ENCODE measurements at regions of chr5 and their contacts with region 1.

Region 1: GRCh38 chr5:78964887-78965286 is 20.2 kb downstream of the ARSB start:
- DNase-seq: no peak
- H3K4me3 ChIP-seq: no peak overlapping the region
- H3K27ac ChIP-seq: no peak overlapping the region
- H3K4me1 ChIP-seq: no peaks in the 10 kb centered on the region
- H3K27me3 ChIP-seq: no peaks in the 10 kb centered on the region
- CTCF ChIP-seq: peak; percentile 50 to 83 (median 62)
- POLR2A ChIP-seq: no peak

Region 2: DNA sequence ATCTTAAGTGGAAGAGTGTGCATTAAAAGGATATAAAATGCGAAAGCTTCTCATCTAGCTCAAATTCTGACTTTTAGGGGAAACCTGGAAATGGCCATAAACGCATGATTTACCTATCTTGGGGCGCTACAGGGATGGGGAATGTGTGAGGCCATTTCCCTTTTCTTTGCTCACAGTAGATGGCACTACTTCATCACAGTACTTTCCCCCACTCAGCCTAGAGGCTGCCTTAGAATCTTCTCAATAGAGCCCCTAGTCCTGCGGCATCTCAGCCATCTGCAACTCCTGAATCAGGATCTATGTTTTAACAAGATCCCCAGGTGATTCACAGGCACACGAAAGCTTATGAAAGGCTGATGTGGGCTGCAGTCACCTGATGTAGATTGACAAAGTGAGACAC is 427.1 kb before region 1 on chr5:
- intact Hi-C with region 1: loop called (anchors 10 kb)
- DNase-seq: peak in 1 of 2 donors; percentile 56
- H3K4me3 ChIP-seq: no peak overlapping the region
- H3K27ac ChIP-seq: no peak overlapping the region
- H3K4me1 ChIP-seq: peaks cover 8 to 12% of the 10 kb centered on the region in 2 donors
- H3K27me3 ChIP-seq: no peaks in the 10 kb centered on the region
- CTCF ChIP-seq: peak; percentile 51 to 74 (median 70)
- POLR2A ChIP-seq: no peak

Region 3: GRCh38 chr5:78648359-78649210 is 316.3 kb before region 1 on chr5 and contains the start of gene LHFPL2:
- intact Hi-C with region 1: loop called (anchors 10 kb)
- DNase-seq: peak; percentile 80 to 83
- H3K4me3 ChIP-seq: peak within 1 kb of the TSS; percentile 50 to 84
- H3K27ac ChIP-seq: peak within 1 kb of the TSS; percentile 98 to 100
- H3K4me1 ChIP-seq: peaks cover 4 to 10% of the 10 kb centered on the region in 2 donors
- H3K27me3 ChIP-seq: no peaks in the 10 kb centered on the region
- CTCF ChIP-seq: peak in 1 of 4 experiments; percentile 1
- POLR2A ChIP-seq: peak; percentile 7 to 65
- total RNA-seq, gene LHFPL2: 14.7 to 127 (median 28.0) TPM